ENCODE measurements at regions of chr20 and their contacts with region 1.

Region 1: DNA sequence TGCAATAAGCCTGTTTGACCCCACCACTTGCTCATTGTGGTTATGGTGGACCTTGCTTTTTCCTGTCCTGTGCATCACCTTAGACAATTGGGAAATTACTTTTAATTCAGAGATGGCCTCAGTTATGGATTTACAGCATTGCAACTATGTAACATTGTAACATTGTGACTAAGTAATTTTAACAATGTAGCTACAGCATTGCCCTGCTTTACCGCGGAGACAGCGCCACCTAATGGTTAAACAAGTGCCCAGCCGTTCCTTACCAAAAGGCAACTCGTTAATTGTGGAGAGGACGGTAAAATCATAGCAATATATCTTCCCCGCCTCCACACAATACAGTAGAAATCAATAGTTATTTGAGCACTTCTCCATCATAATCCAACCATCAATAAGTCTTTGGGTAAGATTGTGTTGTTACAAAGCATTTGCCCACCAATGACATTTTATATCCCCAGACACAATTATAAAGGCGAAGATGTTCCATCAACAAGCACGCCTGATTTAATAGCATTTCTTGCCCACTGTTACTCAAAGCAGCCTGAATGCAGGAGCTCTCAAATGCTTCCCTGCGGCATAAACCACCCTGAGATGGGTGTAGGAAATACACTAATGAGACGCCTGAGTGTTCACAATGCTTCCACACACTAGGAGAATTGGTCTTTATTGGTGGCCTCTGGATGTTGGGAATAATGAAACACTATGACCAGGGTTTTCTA is 93.7 kb downstream of the PROKR2 start:
- DNase-seq: peak; percentile 69
- ATAC-seq: peak; percentile 80
- H3K4me3 Mint-ChIP-seq: no peak overlapping the region
- H3K27ac Mint-ChIP-seq: no peak overlapping the region
- H3K4me1 Mint-ChIP-seq: peaks cover 3% of the 10 kb centered on the region; the same call in 1 of the 2 replicates
- H3K27me3 Mint-ChIP-seq: no peaks in the 10 kb centered on the region; the same call in 1 of the 2 replicates
- CTCF ChIP-seq: peak; percentile 73

Region 2: GRCh38 chr20:5191829-5192569 is 31.1 kb before region 1 on chr20:
- CTCF ChIA-PET with region 1: interaction called, 13 read pairs
- POLR2A ChIA-PET with region 1: no interaction called
- DNase-seq: peak; percentile 16
- ATAC-seq: peak; percentile 73
- H3K4me3 Mint-ChIP-seq: no peak overlapping the region
- H3K27ac Mint-ChIP-seq: peak overlapping the region; percentile 71
- H3K4me1 Mint-ChIP-seq: peaks cover 22% of the 10 kb centered on the region
- H3K27me3 Mint-ChIP-seq: no peaks in the 10 kb centered on the region
- CTCF ChIP-seq: peak; percentile 50; the same call in 1 of the 2 replicates

Region 3: DNA sequence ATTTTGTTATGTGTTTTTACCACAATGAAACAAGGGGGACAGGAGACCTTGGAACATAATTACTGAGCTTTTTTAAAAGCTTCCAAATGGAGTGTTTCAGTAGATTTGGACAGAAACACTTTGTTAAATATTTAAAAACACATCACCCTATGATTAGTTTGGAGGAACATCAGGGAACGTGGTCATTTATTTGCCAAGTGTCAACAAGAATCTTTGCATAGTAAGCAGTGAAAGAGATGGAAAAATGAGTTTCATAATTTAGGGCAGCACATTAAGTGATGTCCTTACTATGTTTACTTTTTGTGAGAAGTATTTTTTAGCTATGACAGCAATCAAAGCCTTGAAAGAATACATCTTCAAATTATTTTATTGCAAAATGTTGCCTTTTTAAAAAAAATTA is 11.1 kb after region 1 on chr20:
- CTCF ChIA-PET with region 1: interaction called, 14 read pairs
- POLR2A ChIA-PET with region 1: no interaction called
- DNase-seq: no peak
- ATAC-seq: no peak
- H3K4me3 Mint-ChIP-seq: no peak overlapping the region
- H3K27ac Mint-ChIP-seq: no peak overlapping the region
- H3K4me1 Mint-ChIP-seq: no peaks in the 10 kb centered on the region
- H3K27me3 Mint-ChIP-seq: peaks cover 15% of the 10 kb centered on the region
- CTCF ChIP-seq: no peak

Region 4: DNA sequence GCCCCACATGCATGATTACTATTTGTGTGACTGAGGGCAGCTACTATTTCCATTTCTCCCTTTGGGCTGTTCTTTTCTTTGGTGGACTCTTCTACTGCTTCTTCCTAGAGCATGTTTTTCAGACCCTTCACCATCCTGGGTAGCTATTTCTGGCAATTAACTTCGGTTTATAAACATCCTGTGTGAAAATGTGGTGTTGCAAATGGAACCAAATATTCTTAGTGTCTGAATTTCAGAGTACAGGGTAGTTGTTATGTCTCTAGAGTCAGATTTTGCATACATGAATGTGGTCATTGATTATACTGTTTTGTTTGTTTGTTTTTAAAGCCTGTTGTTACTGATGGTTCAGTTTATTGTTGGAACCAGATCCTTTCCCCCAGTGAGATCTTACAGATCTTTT is 44.0 kb after region 1 on chr20:
- CTCF ChIA-PET with region 1: interaction called, 10 read pairs
- POLR2A ChIA-PET with region 1: no interaction called
- DNase-seq: no peak
- ATAC-seq: no peak
- H3K4me3 Mint-ChIP-seq: no peak overlapping the region
- H3K27ac Mint-ChIP-seq: no peak overlapping the region
- H3K4me1 Mint-ChIP-seq: peaks cover 59% of the 10 kb centered on the region
- H3K27me3 Mint-ChIP-seq: no peaks in the 10 kb centered on the region
- CTCF ChIP-seq: no peak

Region 5: GRCh38 chr20:5316188-5317158 is 93.4 kb after region 1 on chr20 and contains the start of gene PROKR2:
- CTCF ChIA-PET with region 1: interaction called, 14 read pairs
- POLR2A ChIA-PET with region 1: no interaction called
- DNase-seq: peak; percentile 80
- ATAC-seq: peak; percentile 74
- H3K4me3 Mint-ChIP-seq: peak within 1 kb of the TSS; percentile 89
- H3K27ac Mint-ChIP-seq: no peak within 1 kb of the TSS
- H3K4me1 Mint-ChIP-seq: peaks cover 15% of the 10 kb centered on the region
- H3K27me3 Mint-ChIP-seq: peaks cover 59% of the 10 kb centered on the region
- CTCF ChIP-seq: no peak
- total RNA-seq, gene PROKR2: 1.5 to 2.6 TPM (median 2.0 TPM) in 3 replicates

Region 6: GRCh38 chr20:5402903-5403531 is 179.9 kb after region 1 on chr20:
- CTCF ChIA-PET with region 1: interaction called, 13 read pairs
- POLR2A ChIA-PET with region 1: no interaction called
- DNase-seq: peak; percentile 67
- ATAC-seq: peak; percentile 93
- H3K4me3 Mint-ChIP-seq: no peak overlapping the region
- H3K27ac Mint-ChIP-seq: no peak overlapping the region
- H3K4me1 Mint-ChIP-seq: no peaks in the 10 kb centered on the region
- H3K27me3 Mint-ChIP-seq: no peaks in the 10 kb centered on the region; the same call in 1 of the 2 replicates
- CTCF ChIP-seq: peak; percentile 62

Region 7: GRCh38 chr20:5448449-5449118 is 225.5 kb after region 1 on chr20:
- CTCF ChIA-PET with region 1: interaction called, 23 read pairs
- POLR2A ChIA-PET with region 1: interaction called, 3 read pairs
- DNase-seq: peak; percentile 82
- ATAC-seq: peak; percentile 91
- H3K4me3 Mint-ChIP-seq: no peak overlapping the region
- H3K27ac Mint-ChIP-seq: peak overlapping the region; percentile 35; the same call in 1 of the 2 replicates
- H3K4me1 Mint-ChIP-seq: peaks cover 20% of the 10 kb centered on the region
- H3K27me3 Mint-ChIP-seq: no peaks in the 10 kb centered on the region; the same call in 1 of the 2 replicates
- CTCF ChIP-seq: peak; percentile 68

Measured in WTC11 (cell line).